ENCODE measurements at regions of chr9 and their contacts with region 1.

Region 1: DNA sequence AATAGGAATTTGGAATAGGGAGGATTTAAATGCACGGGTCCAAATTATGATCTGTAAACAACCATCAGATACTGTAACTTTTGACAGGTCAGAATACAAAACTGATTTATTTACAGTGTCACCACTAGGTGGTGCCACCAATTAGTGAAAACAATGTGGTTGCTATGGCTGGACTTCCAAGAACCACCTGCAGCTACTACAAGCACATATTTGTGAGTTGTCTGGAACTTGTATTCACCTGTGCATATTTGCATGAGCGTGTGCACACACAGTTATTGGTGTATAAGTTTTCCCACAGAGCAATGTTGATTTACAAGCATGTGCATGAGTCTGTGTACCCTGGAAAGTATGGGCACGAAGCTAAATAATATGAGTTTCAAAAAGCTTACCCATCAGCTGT is 3.0 kb upstream of the HRCT1 start:
- DNase-seq: peak; percentile 52
- ATAC-seq: peak; percentile 71
- H3K4me3 Mint-ChIP-seq: no peak overlapping the region
- H3K27ac Mint-ChIP-seq: no peak overlapping the region
- H3K4me1 Mint-ChIP-seq: peaks cover 21% of the 10 kb centered on the region
- H3K27me3 Mint-ChIP-seq: no peaks in the 10 kb centered on the region

Region 2: DNA sequence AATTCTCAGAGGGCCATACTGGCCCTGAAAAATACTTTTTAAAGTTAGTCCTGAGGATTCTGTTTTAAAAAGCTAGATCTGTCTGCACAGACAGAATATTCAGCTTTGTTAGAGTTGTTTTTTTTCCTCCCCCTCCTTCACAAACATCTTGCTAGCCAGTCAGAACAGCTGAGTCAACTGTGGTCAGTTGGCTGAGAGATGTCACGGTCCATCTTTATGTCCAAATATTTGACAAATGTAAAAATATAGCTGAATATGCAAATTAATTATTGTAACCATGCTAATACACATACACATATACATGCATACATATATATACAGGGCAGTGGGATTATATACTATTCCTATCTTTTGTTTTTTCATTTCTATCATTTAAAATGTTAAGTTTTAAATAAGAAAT is 707.4 kb before region 1 on chr9:
- CTCF ChIA-PET with region 1: no interaction called
- POLR2A ChIA-PET with region 1: no interaction called
- intact Hi-C with region 1: no loop called
- DNase-seq: no peak
- ATAC-seq: no peak
- H3K4me3 Mint-ChIP-seq: no peak overlapping the region
- H3K27ac Mint-ChIP-seq: no peak overlapping the region
- H3K4me1 Mint-ChIP-seq: no peaks in the 10 kb centered on the region
- H3K27me3 Mint-ChIP-seq: peaks cover 2% of the 10 kb centered on the region

Region 3: GRCh38 chr9:35891646-35892045 is 11.4 kb before region 1 on chr9:
- CTCF ChIA-PET with region 1: interaction called, 10 read pairs
- POLR2A ChIA-PET with region 1: no interaction called
- intact Hi-C with region 1: no loop called
- DNase-seq: no peak
- ATAC-seq: no peak
- H3K4me3 Mint-ChIP-seq: no peak overlapping the region
- H3K27ac Mint-ChIP-seq: no peak overlapping the region
- H3K4me1 Mint-ChIP-seq: no peaks in the 10 kb centered on the region
- H3K27me3 Mint-ChIP-seq: peaks cover 7% of the 10 kb centered on the region

Region 4: GRCh38 chr9:35923927-35924763 is 21.1 kb after region 1 on chr9:
- CTCF ChIA-PET with region 1: interaction called, 15 read pairs
- POLR2A ChIA-PET with region 1: no interaction called
- intact Hi-C with region 1: no loop called
- DNase-seq: peak; percentile 72
- ATAC-seq: peak; percentile 97
- H3K4me3 Mint-ChIP-seq: no peak overlapping the region
- H3K27ac Mint-ChIP-seq: peak overlapping the region; percentile 53
- H3K4me1 Mint-ChIP-seq: peaks cover 25% of the 10 kb centered on the region
- H3K27me3 Mint-ChIP-seq: no peaks in the 10 kb centered on the region

Region 5: DNA sequence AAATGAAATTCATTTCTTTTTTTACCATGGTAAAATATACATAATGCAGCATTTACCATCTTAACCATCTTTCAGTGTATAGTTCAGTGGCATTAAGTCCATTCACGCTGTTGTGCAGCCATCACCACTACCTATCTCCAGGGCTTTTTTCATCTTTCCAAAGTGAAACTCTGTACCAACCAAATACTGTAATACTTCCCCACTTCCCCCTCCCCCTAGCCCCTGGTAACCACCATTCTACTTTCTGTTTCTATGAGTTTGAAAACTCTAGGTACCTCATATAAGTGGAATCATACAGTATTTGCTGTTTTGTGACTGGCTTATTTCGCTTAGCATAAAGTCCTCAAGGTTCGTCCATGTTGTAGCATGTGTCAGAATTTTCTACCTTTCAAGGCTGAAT is 29.7 kb after region 1 on chr9:
- CTCF ChIA-PET with region 1: interaction called, 6 read pairs
- POLR2A ChIA-PET with region 1: no interaction called
- intact Hi-C with region 1: loop called in 1 of 2 experiments (anchors 1 kb)
- DNase-seq: peak; percentile 41
- ATAC-seq: peak; percentile 72
- H3K4me3 Mint-ChIP-seq: no peak overlapping the region
- H3K27ac Mint-ChIP-seq: no peak overlapping the region
- H3K4me1 Mint-ChIP-seq: peaks cover 23% of the 10 kb centered on the region
- H3K27me3 Mint-ChIP-seq: no peaks in the 10 kb centered on the region

Region 6: DNA sequence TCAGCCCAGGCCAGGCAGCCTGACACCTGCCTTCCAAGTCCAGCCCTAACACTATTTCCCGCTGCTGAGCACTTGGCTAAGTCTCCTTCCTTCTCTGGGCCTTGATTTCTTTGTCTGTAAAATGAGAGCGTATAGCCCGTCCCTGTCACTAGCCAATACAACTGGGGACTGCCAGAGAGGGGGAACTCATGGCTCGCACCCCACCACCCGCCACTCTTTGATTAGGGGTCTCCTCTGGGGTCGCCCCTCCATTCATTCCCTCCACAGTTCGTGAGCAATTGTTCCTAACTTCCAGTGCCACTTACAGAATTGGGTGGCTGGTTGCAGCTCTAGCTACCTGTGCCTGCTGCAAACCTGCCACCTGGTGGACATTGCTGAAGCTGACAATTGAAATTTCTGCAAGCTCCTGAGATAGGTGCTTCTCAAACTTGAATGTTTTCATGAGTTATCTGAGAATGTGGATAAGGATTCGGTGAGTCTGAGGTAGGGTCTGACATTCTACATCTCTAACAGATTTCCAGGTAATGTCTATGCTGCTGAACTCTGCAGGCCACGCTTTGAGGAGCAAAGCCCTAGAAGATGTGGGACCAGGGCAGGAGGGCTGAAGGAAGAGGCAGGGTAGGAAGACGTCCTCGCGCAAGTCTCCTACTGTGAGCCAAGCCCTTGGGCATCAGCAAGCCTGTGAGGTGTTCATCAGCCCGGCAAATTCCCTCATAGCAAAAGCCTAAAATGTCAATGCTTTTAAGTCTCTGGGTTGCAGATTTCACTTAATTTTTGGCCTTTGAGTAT is 120.4 kb after region 1 on chr9:
- CTCF ChIA-PET with region 1: interaction called, 13 read pairs
- POLR2A ChIA-PET with region 1: no interaction called
- intact Hi-C with region 1: loop called (anchors 1 kb)
- DNase-seq: peak; percentile 83
- ATAC-seq: peak; percentile 90
- H3K4me3 Mint-ChIP-seq: no peak overlapping the region
- H3K27ac Mint-ChIP-seq: no peak overlapping the region
- H3K4me1 Mint-ChIP-seq: no peaks in the 10 kb centered on the region
- H3K27me3 Mint-ChIP-seq: no peaks in the 10 kb centered on the region

Region 7: GRCh38 chr9:36125062-36125855 is 222.2 kb after region 1 on chr9:
- CTCF ChIA-PET with region 1: no interaction called
- POLR2A ChIA-PET with region 1: no interaction called
- intact Hi-C with region 1: no loop called
- DNase-seq: no peak
- ATAC-seq: peak; percentile 57
- H3K4me3 Mint-ChIP-seq: no peak overlapping the region
- H3K27ac Mint-ChIP-seq: no peak overlapping the region
- H3K4me1 Mint-ChIP-seq: peaks cover 17% of the 10 kb centered on the region
- H3K27me3 Mint-ChIP-seq: no peaks in the 10 kb centered on the region